GM12878 (cell line): ENCODE measurements at regions of chr4 and their contacts with region 1.

Region 1: GRCh38 chr4:107719922-107720722 is at the start of gene PAPSS1:
- DNase-seq: peak; percentile 81
- ATAC-seq: peak; percentile 89
- H3K4me3 ChIP-seq: peak within 1 kb of the TSS; percentile 87
- H3K27ac ChIP-seq: peak within 1 kb of the TSS; percentile 54
- H3K4me1 ChIP-seq: 0 out of 2 replicates have a peak, but pooled peaks cover 3% of the 10 kb centered on the region
- H3K27me3 ChIP-seq: no peaks in the 10 kb centered on the region
- CTCF ChIP-seq: no peak
- EP300 ChIP-seq: no peak
- POLR2A ChIP-seq: peak; percentile 75
- RAD21 ChIP-seq: 0 out of 2 replicates have a peak, but pooled peaks have one; percentile 7
- polyA plus RNA-seq, gene PAPSS1: 29.8 to 35.9 TPM

Region 2: GRCh38 chr4:107747748-107748486 is 27.8 kb after region 1 on chr4:
- CTCF ChIA-PET with region 1: no interaction called
- POLR2A ChIA-PET with region 1: no interaction called
- RAD21 ChIA-PET with region 1: no interaction called
- SMC1A ChIA-PET with region 1: no interaction called
- in situ Hi-C with region 1: no loop called
- intact Hi-C with region 1: no loop called
- DNase-seq: no peak
- ATAC-seq: no peak
- H3K4me3 ChIP-seq: no peak overlapping the region
- H3K27ac ChIP-seq: no peak overlapping the region
- H3K4me1 ChIP-seq: no peaks in the 10 kb centered on the region
- H3K27me3 ChIP-seq: no peaks in the 10 kb centered on the region
- CTCF ChIP-seq: no peak
- EP300 ChIP-seq: no peak
- POLR2A ChIP-seq: no peak
- RAD21 ChIP-seq: no peak

Region 3: DNA sequence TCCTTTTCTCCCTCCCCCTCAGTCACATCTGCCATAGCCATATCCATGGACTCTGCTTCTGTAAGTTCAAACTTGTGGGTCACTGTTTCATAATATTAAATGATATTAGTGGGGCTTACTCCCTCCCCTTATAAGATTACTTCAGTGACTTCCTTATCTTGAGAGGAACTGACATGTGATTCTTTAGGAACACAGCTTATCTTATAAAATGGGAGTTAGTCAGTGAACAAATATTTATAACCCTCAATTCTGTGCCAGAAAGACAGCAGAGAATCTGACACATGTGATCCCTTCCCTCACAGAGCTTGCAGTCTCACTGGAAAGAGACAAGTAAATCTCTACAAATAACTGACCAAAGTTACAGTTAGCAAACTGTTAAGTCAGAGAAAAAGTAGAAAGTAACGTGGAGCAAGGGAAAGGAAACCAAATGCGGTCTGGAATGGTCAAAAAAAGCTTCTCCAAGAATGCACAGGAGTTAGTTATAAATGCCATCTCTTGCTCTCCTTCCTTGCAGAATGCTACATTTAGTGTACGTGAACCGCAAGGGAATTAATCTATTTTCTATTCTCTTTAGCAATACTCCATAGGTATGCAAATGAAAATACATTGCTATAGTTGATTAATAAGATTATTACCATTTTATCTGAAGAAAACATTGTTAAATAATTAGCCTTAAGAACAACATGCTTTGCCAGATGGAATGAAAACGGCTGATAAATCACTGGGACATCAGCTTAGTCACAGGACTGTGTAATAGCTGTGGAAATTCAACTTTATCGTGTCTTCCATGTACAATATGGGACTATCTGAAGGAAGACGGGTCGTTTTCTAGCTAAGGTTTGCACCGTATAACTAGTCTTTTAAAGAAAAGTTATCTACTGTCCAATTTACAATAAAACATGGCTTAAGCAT is 133.6 kb after region 1 on chr4:
- CTCF ChIA-PET with region 1: no interaction called
- POLR2A ChIA-PET with region 1: no interaction called
- RAD21 ChIA-PET with region 1: no interaction called
- SMC1A ChIA-PET with region 1: no interaction called
- in situ Hi-C with region 1: no loop called
- intact Hi-C with region 1: no loop called
- DNase-seq: no peak
- ATAC-seq: no peak
- H3K4me3 ChIP-seq: no peak overlapping the region
- H3K27ac ChIP-seq: no peak overlapping the region
- H3K4me1 ChIP-seq: no peaks in the 10 kb centered on the region
- H3K27me3 ChIP-seq: no peaks in the 10 kb centered on the region
- CTCF ChIP-seq: no peak
- EP300 ChIP-seq: no peak
- POLR2A ChIP-seq: no peak
- RAD21 ChIP-seq: no peak

Region 4: DNA sequence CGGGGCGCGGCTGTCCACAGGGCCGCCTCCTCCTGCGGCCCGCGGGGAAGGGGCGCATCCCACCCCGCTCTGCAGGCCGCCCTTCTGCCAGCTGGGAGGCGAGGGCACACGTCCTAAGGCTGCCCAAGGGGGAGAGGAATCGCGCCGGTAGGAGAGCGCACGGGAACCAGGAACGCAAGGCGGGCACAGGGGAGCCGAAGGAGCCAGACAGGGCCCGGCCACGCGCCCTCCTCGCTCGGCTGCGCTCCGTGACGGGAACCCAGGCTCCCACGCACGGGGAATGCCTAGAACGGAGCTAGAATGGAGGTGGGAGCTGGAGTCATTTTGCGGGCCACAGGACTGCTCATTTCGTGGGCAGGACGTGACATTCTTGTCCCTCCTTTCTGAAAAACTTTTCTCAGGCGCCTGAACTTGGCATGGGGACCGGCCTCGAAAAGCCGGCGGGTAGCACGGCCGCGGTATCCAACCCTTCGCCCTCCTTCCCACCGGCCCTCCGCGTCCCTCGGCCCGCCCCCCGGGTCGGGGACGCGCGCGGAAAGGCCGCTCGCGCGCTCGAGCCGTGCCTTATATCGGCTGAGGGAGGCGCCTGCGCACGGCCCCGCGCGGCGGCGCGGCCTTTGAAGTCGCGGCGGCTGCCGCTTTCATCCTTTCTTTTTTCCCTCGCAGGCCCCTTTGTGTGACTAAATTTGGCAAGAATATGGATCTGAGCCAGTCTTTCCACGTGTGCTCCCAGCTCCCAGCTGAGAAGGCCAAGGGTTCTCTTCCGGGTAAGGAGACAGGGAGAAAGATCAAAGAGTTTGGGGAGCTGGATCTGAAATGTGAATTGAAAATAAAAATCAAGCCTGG is 452.9 kb after region 1 on chr4:
- CTCF ChIA-PET with region 1: no interaction called
- POLR2A ChIA-PET with region 1: no interaction called
- RAD21 ChIA-PET with region 1: no interaction called
- SMC1A ChIA-PET with region 1: no interaction called
- in situ Hi-C with region 1: loop called (anchors 25 kb)
- intact Hi-C with region 1: no loop called
- DNase-seq: no peak
- ATAC-seq: peak; percentile 71
- H3K4me3 ChIP-seq: peak overlapping the region; percentile 71
- H3K27ac ChIP-seq: no peak overlapping the region
- H3K4me1 ChIP-seq: 0 out of 2 replicates have a peak, but pooled peaks cover 3% of the 10 kb centered on the region
- H3K27me3 ChIP-seq: peaks cover 11 to 31% of the 10 kb centered on the region in 2 experiments
- CTCF ChIP-seq: no peak
- EP300 ChIP-seq: no peak
- POLR2A ChIP-seq: peak; percentile 62
- RAD21 ChIP-seq: no peak